Ascending aorta (tissue), 2 donors: ENCODE measurements at regions of chr2 and their contacts with region 1.

Region 1: GRCh38 chr2:197434541-197435513 is at the start of gene SF3B1:
- DNase-seq: peak; percentile 94 to 99
- H3K4me3 ChIP-seq: peak within 1 kb of the TSS; percentile 87 to 100
- H3K27ac ChIP-seq: peak within 1 kb of the TSS; percentile 96 to 99
- H3K4me1 ChIP-seq: peaks cover 0 to 29% of the 10 kb centered on the region in 2 donors
- H3K27me3 ChIP-seq: no peaks in the 10 kb centered on the region
- CTCF ChIP-seq: no peak
- total RNA-seq, gene SF3B1: 88.6 TPM

Region 2: DNA sequence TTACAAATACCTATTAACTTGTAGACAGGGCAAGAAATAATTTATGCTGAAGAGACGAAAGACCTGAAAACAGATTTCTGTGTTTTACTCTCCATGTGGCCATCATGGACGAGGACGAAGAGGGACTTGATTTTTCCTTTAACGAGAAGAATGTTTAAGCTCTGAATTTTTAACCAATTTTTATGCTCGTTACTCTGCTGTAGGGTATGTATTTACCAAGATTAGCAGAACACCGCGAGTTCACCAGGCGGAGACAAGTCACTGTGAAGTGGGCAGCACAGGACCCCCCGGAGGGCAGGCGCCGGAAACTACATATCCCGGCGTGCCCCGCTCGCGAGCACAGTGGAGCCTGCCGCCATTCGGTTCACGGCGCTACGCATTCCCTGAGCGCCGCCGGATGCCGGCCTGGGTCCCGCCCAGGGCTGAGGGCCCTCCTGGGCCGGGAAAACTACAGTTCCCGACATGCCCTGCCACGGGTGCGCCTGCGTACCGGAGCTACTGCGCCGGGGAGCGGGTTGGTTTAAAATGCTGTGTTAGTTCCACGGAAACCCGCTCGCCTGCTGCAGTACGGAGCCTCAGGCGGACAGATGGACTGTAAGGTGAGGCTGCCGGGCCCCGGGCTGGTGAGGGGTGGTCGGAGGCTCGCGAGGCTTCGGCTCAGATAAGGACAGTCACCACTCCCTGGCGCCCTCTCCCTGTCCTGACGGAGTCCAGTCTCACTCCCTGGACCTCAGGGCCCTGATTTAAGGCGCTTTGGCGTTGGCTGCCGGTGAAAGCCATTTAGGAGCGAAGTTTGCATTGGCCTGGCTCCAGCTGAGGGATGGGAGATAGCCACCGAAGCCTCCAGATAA is 795.4 kb before region 1 on chr2 and contains the start of gene CCDC150:
- intact Hi-C with region 1: loop called (anchors 10 kb)
- DNase-seq: peak; percentile 75 to 96
- H3K4me3 ChIP-seq: peak within 1 kb of the TSS; percentile 70 to 72
- H3K27ac ChIP-seq: no peak within 1 kb of the TSS
- H3K4me1 ChIP-seq: peaks cover 0 to 5% of the 10 kb centered on the region in 2 donors
- H3K27me3 ChIP-seq: no peaks in the 10 kb centered on the region
- CTCF ChIP-seq: peak; percentile 12 to 51 (median 21)
- total RNA-seq, gene CCDC150: 7.1 TPM

Region 3: DNA sequence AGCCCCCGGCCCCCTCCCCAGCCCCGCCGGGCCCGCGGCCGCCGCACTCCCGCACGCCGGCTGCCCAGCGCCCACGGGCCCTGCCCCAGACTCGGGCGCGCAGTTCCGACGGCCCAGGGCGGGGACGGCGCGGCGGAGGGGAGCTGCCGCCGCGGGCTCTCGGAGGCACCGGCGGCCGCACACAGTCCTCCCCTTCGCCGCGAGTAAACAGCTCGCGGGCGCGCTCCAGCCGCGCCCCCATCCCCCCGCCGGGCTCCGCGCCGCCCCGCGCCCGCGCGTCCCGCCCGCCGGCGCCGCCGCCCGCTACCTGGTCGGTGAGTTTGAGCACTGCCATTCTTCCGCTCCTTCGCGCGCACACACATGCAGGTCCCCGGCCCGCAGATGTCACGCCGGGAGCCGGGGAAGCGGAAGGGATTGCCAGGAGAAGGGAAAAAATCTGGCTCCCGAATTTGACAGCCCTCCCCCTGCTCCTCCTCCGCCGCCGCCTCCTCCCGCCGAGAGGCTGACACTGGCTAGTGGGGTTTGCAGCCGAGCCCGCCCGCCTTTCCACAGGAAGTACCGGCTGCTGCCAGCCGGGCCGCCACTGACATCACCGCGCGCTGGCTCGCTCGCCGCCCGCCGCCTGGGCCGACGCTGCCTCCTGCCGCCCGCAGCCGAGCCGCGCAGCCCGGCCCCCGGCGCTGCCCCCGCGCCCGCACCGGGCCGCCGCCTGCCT is 124.4 kb before region 1 on chr2 and contains the start of gene ANKRD44:
- intact Hi-C with region 1: loop called (anchors 1 kb)
- DNase-seq: peak; percentile 74 to 95
- H3K4me3 ChIP-seq: peak within 1 kb of the TSS; percentile 77 to 89
- H3K27ac ChIP-seq: peak within 1 kb of the TSS; percentile 83 to 86
- H3K4me1 ChIP-seq: peaks cover 5 to 37% of the 10 kb centered on the region in 2 donors
- H3K27me3 ChIP-seq: no peaks in the 10 kb centered on the region
- CTCF ChIP-seq: peak in 2 of 3 experiments; percentile 34 to 76
- total RNA-seq, gene ANKRD44: 66.3 TPM

Region 4: GRCh38 chr2:197322724-197323720 is 111.8 kb before region 1 on chr2:
- intact Hi-C with region 1: no loop called
- DNase-seq: no peak
- H3K4me3 ChIP-seq: no peak overlapping the region
- H3K27ac ChIP-seq: no peak overlapping the region
- H3K4me1 ChIP-seq: no peaks in the 10 kb centered on the region
- H3K27me3 ChIP-seq: no peaks in the 10 kb centered on the region
- CTCF ChIP-seq: no peak

Region 5: GRCh38 chr2:197461057-197461456 is 26.2 kb after region 1 on chr2:
- intact Hi-C with region 1: no loop called
- DNase-seq: no peak
- H3K4me3 ChIP-seq: no peak overlapping the region
- H3K27ac ChIP-seq: no peak overlapping the region
- H3K4me1 ChIP-seq: no peaks in the 10 kb centered on the region
- H3K27me3 ChIP-seq: no peaks in the 10 kb centered on the region
- CTCF ChIP-seq: no peak

Region 6: GRCh38 chr2:197499594-197500526 is 65.0 kb after region 1 on chr2 and contains the starts of genes HSPD1 and HSPE1:
- intact Hi-C with region 1: loop called (anchors 2 kb)
- DNase-seq: peak; percentile 93 to 99
- H3K4me3 ChIP-seq: peak within 1 kb of the TSS; percentile 94 to 98
- H3K27ac ChIP-seq: peak within 1 kb of the TSS; percentile 97 to 98
- H3K4me1 ChIP-seq: peaks cover 11 to 42% of the 10 kb centered on the region in 2 donors
- H3K27me3 ChIP-seq: no peaks in the 10 kb centered on the region
- CTCF ChIP-seq: peak in 1 of 3 experiments; percentile 29
- total RNA-seq, gene HSPD1: 110 TPM
- total RNA-seq, gene HSPE1: 72.7 TPM

Region 7: DNA sequence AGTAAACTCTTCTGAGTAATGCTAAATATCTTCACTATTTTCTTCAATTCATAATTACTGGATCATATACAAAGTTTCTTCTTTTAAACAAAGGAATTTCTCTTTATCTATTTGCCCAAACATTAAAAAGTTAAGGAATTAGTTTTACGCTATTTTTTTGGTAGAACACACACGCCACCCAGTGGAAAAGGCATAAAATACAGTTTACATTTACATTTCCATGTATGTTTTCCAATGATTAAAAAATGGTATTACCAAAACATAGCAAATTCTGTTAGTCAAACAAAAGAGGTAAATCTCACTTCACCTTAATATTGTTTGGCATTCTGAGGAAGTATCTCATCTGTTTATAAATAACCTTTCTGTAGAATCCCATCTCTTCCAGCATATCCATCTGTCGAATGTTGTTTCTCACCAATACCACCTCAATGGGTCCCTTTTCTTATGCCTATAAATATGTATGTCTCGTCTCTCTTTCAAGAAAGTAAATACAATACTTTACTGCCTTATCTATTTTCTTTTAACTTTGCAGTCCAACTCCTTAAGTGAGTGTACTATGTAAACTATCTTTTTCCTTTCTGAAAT is 343.1 kb after region 1 on chr2:
- intact Hi-C with region 1: loop called (anchors 10 kb)
- DNase-seq: no peak
- H3K4me3 ChIP-seq: no peak overlapping the region
- H3K27ac ChIP-seq: peak overlapping the region in 1 of 2 donors; percentile 9
- H3K4me1 ChIP-seq: peaks cover 0 to 14% of the 10 kb centered on the region in 2 donors
- H3K27me3 ChIP-seq: no peaks in the 10 kb centered on the region
- CTCF ChIP-seq: peak; percentile 59 to 80 (median 75)